CD4-positive, alpha-beta memory T cell (primary cell): ENCODE measurements at regions of chr18 and their contacts with region 1.

Region 1: DNA sequence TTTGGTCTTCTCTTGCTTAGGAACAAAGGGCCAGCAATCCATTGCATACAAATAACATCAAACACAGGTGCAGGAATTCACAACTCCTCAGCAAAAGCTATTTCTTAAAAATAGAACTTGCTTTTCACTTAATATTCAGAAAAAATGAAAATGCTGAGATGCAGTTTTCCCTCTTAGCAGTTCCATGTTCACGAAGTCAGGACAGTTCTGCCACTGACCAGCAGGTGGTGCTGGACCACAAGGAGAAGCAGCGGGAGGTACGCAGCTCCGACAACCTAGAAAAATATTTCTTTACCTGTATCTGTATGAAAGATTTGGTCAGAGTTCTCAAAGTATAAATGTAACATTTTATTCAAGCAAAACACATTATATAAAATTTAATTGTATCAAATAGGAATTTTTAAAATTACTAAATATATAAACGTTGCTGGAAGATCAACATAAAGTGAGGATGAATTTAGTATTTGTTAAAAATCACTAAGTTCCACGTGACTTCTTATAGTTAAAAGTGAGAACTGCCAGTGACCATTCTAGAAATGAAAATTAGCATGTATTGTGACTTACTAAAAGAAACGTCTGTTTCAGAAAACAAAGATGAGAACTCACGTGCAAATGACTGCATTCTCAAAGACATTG is 48.8 kb downstream of the ADNP2 start:
- DNase-seq: peak; percentile 47 to 75 (median 56)
- H3K4me3 ChIP-seq: no peak overlapping the region
- H3K4me3 Mint-ChIP-seq: no peak overlapping the region
- H3K27ac ChIP-seq: no peak overlapping the region
- H3K27ac Mint-ChIP-seq: no peak overlapping the region
- H3K4me1 ChIP-seq: no peaks in the 10 kb centered on the region
- H3K4me1 Mint-ChIP-seq: peaks cover 4 to 7% (median 7%) of the 10 kb centered on the region in 4 donors
- H3K27me3 ChIP-seq: no peaks in the 10 kb centered on the region
- H3K27me3 Mint-ChIP-seq: peaks cover 9 to 17% of the 10 kb centered on the region in 2 donors

Region 2: DNA sequence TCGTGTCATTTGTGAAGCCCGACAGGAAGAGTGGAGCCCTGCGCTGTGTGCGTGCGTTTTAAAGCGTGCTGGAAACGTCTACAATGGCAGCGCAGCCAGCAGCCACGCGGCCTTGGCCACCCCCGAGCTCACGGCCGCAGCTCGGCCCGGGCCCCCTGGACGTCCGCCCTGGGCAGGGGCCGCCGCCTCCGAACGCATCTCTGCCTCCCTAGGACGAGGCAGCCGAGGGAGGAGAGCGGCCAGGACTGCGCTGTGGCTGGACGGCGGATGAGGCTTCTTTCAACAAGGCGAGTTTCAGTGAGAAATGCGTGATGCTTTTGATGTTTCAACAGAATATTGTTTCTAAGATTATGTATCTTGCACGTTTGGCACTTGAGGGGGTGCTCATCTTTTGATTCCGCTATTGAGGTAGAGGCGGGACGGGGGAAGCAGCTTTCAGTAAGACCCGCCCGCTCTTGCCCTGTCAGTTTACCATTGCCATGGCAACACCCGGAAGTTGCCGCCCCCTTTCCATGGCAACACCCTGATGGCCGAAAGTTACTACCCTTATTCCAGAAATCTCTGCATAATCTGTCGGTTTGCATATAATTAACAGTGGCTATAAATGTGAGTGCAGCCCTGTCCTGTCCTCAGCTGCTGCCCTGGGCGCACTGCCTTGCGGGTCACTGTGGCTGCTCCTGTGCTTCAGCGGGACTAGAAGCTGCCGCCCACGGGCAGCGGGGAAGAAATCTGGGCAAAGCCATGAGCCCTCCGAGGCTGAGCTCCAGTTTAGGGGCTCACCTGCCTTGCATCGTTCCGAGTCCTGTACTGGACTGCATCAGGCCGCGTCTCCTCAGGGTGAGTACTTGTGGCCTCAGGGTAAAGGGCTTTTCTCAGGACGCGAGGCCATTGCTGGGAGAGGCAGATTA is 10.2 kb before region 1 on chr18:
- CTCF ChIA-PET with region 1: interaction called, 40 read pairs
- POLR2A ChIA-PET with region 1: no interaction called
- intact Hi-C with region 1: no loop called
- DNase-seq: peak; percentile 60 to 83 (median 62)
- H3K4me3 ChIP-seq: peak overlapping the region; percentile 9 to 54
- H3K4me3 Mint-ChIP-seq: peak overlapping the region; percentile 84 to 94 (median 86)
- H3K27ac ChIP-seq: no peak overlapping the region
- H3K27ac Mint-ChIP-seq: peak overlapping the region in 6 of 7 donors; percentile 19 to 72 (median 48)
- H3K4me1 ChIP-seq: peaks cover 15% of the 10 kb centered on the region
- H3K4me1 Mint-ChIP-seq: peaks cover 5 to 34% (median 14%) of the 10 kb centered on the region in 4 donors
- H3K27me3 ChIP-seq: peaks cover 4% of the 10 kb centered on the region
- H3K27me3 Mint-ChIP-seq: peaks cover 6 to 11% of the 10 kb centered on the region in 2 donors

Region 3: DNA sequence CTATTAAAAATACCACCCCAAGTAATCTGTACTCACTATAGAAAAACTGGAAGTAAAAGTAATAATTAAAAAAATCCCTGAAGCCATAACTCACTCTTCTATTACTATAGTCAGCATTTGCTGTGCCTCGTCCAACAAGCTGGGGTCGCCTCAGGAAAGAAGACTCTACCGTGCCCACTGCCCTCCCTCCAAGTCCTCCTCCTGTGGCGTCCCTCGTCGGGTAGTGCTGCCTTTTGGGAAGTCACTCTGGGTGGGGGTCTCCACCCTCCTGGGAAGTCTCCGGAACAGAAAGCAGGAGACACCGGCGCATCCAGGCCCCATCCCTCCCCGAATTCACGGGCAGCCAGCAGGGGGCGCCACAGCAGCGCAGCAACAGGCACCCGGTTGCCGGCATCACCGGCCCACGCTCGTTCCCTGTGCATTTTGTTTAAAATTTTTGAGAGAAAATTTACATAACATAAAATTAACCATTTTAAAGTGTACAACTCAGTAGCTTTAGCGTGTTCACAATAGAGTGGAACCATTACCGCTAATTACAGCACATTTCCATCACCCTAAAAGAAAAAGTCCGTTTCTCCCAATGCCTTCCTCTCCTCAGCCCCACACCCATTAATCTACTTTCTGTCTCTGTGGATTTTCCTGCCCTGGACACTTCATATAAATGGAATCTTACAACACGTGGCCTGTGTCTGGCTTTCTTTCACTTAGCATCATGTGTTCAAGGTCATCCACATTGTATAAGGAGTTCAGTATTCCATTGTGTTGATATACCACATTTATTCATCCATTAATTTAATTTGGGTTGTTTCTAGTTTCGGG is 13.4 kb after region 1 on chr18:
- CTCF ChIA-PET with region 1: interaction called, 10 read pairs
- POLR2A ChIA-PET with region 1: no interaction called
- intact Hi-C with region 1: no loop called
- DNase-seq: peak in 1 of 5 donors; percentile 30
- H3K4me3 ChIP-seq: no peak overlapping the region
- H3K4me3 Mint-ChIP-seq: no peak overlapping the region
- H3K27ac ChIP-seq: no peak overlapping the region
- H3K27ac Mint-ChIP-seq: peak overlapping the region in 1 of 7 donors; percentile 63
- H3K4me1 ChIP-seq: peaks cover 26% of the 10 kb centered on the region
- H3K4me1 Mint-ChIP-seq: peaks cover 16 to 27% (median 19%) of the 10 kb centered on the region in 4 donors
- H3K27me3 ChIP-seq: no peaks in the 10 kb centered on the region
- H3K27me3 Mint-ChIP-seq: peaks cover 18 to 19% of the 10 kb centered on the region in 2 donors

Region 4: DNA sequence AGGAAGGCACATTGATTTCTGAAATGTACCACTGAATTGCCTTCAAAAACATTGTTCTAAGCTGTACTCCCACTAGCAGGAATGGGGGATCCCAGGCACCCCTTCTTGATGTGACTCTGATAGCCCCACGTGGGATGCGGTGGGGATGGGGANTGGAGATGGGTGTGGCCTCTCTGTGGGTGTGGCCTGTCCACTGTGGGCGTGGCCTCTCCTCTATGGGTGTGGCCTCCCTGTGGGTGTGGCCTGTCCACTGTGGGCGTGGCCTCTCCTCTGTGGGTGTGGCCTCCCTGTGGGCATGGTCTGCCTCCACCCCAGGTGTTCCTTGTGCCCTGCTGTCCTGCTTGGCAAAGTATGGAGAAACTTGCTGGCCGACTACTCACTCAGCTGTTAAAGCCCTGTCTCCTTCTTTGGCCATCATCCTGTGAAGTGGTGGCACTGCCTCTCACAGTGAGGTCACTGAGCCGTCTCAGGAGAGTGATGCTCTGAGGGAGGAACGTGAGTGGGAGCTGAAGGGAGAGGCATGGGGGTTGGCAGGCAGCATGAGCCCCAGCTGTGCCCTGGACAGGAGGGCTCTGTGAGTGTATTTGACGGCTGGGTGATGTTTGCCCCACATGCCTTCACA is 96.2 kb after region 1 on chr18:
- CTCF ChIA-PET with region 1: interaction called, 25 read pairs
- POLR2A ChIA-PET with region 1: no interaction called
- intact Hi-C with region 1: no loop called
- DNase-seq: peak in 1 of 5 donors; percentile 11
- H3K4me3 ChIP-seq: no peak overlapping the region
- H3K4me3 Mint-ChIP-seq: no peak overlapping the region
- H3K27ac ChIP-seq: no peak overlapping the region
- H3K27ac Mint-ChIP-seq: no peak overlapping the region
- H3K4me1 ChIP-seq: no peaks in the 10 kb centered on the region
- H3K4me1 Mint-ChIP-seq: no peaks in the 10 kb centered on the region
- H3K27me3 ChIP-seq: no peaks in the 10 kb centered on the region
- H3K27me3 Mint-ChIP-seq: peaks cover 0 to 2% of the 10 kb centered on the region in 2 donors